Heart right ventricle (tissue), 16 donors: ENCODE measurements at regions of chr7 and their contacts with region 1.

Region 1: GRCh38 chr7:20598459-20599309 is 16.8 kb upstream of the ABCB5 start:
- DNase-seq: no peak
- ATAC-seq: peak in 7 of 8 donors; percentile 49 to 80 (median 74)
- H3K4me3 ChIP-seq: peak overlapping the region in 2 of 10 donors; percentile 26 to 34
- H3K27ac ChIP-seq: no peak overlapping the region
- H3K4me1 ChIP-seq: peaks cover 0 to 7% (median 0%) of the 10 kb centered on the region in 9 donors
- H3K27me3 ChIP-seq: peaks cover 0 to 25% (median 0%) of the 10 kb centered on the region in 7 donors
- CTCF ChIP-seq: peak; percentile 34 to 85 (median 80)

Region 2: GRCh38 chr7:19713676-19714075 is 885.0 kb before region 1 on chr7:
- intact Hi-C with region 1: loop called (anchors 1 to 10 kb)
- DNase-seq: no peak
- ATAC-seq: no peak
- H3K4me3 ChIP-seq: no peak overlapping the region
- H3K27ac ChIP-seq: no peak overlapping the region
- H3K4me1 ChIP-seq: peaks cover 0 to 8% (median 0%) of the 10 kb centered on the region in 9 donors
- H3K27me3 ChIP-seq: peaks cover 0 to 7% (median 0%) of the 10 kb centered on the region in 7 donors
- CTCF ChIP-seq: peak in 8 of 9 donors; percentile 30 to 72 (median 58)

Region 3: DNA sequence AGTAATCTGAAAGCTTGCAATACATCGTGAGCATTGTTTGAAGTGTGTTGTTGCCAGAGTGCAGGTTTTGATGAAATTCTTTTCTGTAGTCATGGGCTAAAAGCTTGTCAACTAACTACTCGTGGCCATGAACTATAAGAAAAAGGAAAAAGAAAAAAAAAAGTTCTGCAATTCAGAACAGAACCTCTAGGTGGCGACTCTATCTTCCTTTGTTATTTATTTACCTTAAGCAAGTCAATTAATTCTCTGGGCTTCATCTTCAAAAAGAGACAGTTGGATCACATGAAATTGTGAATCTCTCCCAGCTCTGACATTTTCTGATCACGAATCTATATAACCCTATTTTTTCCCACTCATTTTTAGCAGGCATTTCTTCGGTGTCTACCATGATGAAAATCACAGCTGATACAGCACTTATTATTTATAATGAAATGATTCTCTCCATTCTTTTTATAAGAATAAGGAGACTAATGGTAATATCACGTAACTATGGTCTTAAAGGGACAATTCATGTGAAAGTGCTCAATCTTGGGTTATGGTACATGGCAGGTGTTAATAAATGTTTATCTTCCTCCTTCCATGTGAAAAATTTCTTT is 844.1 kb before region 1 on chr7:
- intact Hi-C with region 1: loop called in 8 of 10 experiments (anchors 2 to 10 kb)
- DNase-seq: no peak
- ATAC-seq: no peak
- H3K4me3 ChIP-seq: no peak overlapping the region
- H3K27ac ChIP-seq: no peak overlapping the region
- H3K4me1 ChIP-seq: no peaks in the 10 kb centered on the region
- H3K27me3 ChIP-seq: no peaks in the 10 kb centered on the region
- CTCF ChIP-seq: peak; percentile 10 to 75 (median 66)

Region 4: GRCh38 chr7:20164425-20165145 is 434.1 kb before region 1 on chr7:
- intact Hi-C with region 1: loop called in 9 of 10 experiments (anchors 2 to 10 kb)
- DNase-seq: no peak
- ATAC-seq: no peak
- H3K4me3 ChIP-seq: no peak overlapping the region
- H3K27ac ChIP-seq: peak overlapping the region in 2 of 10 donors; percentile 26 to 35
- H3K4me1 ChIP-seq: peaks cover 0 to 13% (median 0%) of the 10 kb centered on the region in 9 donors
- H3K27me3 ChIP-seq: no peaks in the 10 kb centered on the region
- CTCF ChIP-seq: no peak

Region 5: GRCh38 chr7:20330240-20330927 is 268.3 kb before region 1 on chr7 and contains the start of gene ITGB8:
- intact Hi-C with region 1: loop called in 3 of 10 experiments (anchors 10 kb)
- DNase-seq: peak; percentile 74 to 78
- ATAC-seq: peak; percentile 91 to 97 (median 94)
- H3K4me3 ChIP-seq: peak within 1 kb of the TSS; percentile 47 to 74 (median 66)
- H3K27ac ChIP-seq: peak within 1 kb of the TSS; percentile 59 to 88 (median 82)
- H3K4me1 ChIP-seq: peaks cover 0 to 30% (median 12%) of the 10 kb centered on the region in 9 donors
- H3K27me3 ChIP-seq: peaks cover 0 to 37% (median 16%) of the 10 kb centered on the region in 7 donors
- CTCF ChIP-seq: no peak
- total RNA-seq, gene ITGB8: 0.93 to 10.7 (median 3.0) TPM